Mammary epithelial cell (primary cell): ENCODE measurements at regions of chrX and their contacts with region 1.

Region 1: GRCh38 chrX:101415180-101416145 is 7.4 kb downstream of the HNRNPH2 start:
- DNase-seq: peak; percentile 53
- H3K4me3 ChIP-seq: no peak overlapping the region
- H3K27ac ChIP-seq: no peak overlapping the region
- H3K4me1 ChIP-seq: peaks cover 3% of the 10 kb centered on the region
- H3K27me3 ChIP-seq: no peaks in the 10 kb centered on the region
- CTCF ChIP-seq: peak; percentile 62 to 78

Region 2: DNA sequence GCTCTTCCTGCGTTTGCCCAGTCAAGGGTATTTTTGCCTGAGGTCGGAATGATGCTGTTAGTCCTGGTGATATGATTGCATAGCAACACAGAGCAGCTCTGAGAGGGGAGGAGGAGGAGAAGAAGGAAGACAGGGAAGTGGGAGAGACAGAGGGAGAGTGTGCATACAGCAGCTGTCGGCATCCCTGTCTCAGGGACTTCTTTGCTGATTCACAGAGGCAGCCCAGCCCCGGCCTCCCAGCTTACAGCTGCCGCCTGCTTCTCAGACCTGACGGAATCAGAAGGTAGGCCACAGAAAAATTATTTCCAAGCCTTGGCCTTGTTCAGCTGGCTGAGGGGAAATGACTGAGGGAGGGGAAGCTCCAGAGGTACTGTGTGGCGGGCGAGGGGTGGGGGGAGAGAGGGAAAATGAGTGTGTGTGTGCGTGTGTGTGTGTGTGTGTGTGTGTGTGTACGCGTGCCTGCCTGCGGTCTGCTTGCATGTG is 195.6 kb before region 1 on chrX:
- CTCF ChIA-PET with region 1: no interaction called
- dilution Hi-C with region 1: no loop called
- in situ Hi-C with region 1: no loop called
- intact Hi-C with region 1: no loop called
- DNase-seq: no peak
- H3K4me3 ChIP-seq: no peak overlapping the region
- H3K27ac ChIP-seq: no peak overlapping the region
- H3K4me1 ChIP-seq: no peaks in the 10 kb centered on the region
- H3K27me3 ChIP-seq: peaks cover 4% of the 10 kb centered on the region
- CTCF ChIP-seq: no peak

Region 3: DNA sequence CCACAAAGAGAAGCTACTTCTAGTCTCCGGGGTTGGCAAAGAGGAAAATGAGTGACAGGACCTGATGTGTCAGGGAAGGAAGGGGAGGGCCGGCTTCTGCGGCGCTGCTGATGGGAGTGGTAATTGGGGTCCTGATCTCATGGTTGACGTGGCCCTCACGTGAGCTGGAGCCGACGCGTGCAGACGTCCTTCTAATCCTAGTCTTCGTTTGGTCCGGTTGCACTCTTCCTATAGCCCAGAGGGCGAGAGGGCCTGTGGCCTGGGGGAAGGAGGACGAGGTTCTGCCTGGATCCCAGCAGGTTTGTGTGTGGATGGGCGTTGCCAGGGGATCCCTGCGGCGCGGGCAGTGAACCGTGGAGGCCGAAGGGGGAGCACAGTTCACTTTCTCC is 134.9 kb after region 1 on chrX and contains the start of gene ARMCX1:
- CTCF ChIA-PET with region 1: no interaction called
- dilution Hi-C with region 1: no loop called
- in situ Hi-C with region 1: no loop called
- intact Hi-C with region 1: loop called (anchors 5 kb)
- DNase-seq: peak; percentile 41
- H3K4me3 ChIP-seq: peak within 1 kb of the TSS; percentile 46 to 59 (median 56)
- H3K27ac ChIP-seq: peak within 1 kb of the TSS; percentile 41
- H3K4me1 ChIP-seq: no peaks in the 10 kb centered on the region
- H3K27me3 ChIP-seq: no peaks in the 10 kb centered on the region
- CTCF ChIP-seq: no peak
- total RNA-seq, gene ARMCX1: 13.8 to 22.0 TPM

Region 4: GRCh38 chrX:101799387-101799786 is 383.9 kb after region 1 on chrX:
- CTCF ChIA-PET with region 1: no interaction called
- dilution Hi-C with region 1: no loop called
- in situ Hi-C with region 1: no loop called
- intact Hi-C with region 1: loop called (anchors 1 kb)
- DNase-seq: peak; percentile 78
- H3K4me3 ChIP-seq: no peak overlapping the region
- H3K27ac ChIP-seq: no peak overlapping the region
- H3K4me1 ChIP-seq: no peaks in the 10 kb centered on the region
- H3K27me3 ChIP-seq: no peaks in the 10 kb centered on the region
- CTCF ChIP-seq: peak; percentile 60 to 70